ENCODE measurements at regions of chr7 and their contacts with region 1.

Region 1: DNA sequence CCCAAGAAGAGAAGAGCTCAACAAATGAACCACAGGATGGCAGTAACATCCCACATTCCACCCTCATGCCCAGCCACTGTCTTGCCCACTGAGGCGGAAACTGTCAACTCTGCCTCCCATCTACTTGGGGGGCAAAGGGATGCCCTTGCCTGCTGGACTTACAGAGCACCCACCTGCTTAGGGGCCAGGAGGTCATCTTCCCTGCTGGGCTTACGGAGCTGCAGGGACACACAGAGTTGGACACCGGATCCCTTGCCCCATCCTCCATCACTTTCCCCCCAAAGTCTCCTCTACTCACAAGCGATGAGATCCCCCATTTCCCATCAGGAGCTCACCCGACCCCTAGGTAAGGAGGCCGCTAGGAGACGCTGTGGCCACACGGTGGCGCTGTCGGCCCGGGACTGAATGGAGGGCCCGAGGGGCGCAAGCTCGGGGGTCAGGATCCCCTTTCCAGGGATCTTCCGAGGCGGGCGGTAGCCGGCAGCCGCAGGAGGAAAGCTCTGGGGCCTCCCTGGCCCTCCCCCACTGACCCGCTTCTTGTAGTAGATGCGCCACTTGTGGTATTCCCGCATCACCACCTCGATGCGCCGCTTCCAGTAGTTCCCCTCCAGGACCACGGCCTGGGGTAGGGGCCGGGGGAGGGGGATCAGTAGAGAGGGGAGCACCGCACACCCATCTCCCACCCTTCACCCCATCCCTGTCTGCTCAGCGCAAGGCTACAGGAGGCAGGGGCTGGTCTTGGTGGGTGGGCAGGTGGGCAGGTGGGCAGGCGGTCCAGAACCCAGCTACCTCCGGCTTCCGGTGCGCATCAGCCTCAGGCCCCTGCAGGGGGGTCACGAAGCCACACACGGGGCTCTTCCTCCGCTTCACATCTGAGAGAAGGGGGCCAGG is 17.3 kb downstream of the MLXIPL start:
- DNase-seq: peak; percentile 74
- ATAC-seq: peak; percentile 94
- H3K4me3 Mint-ChIP-seq: no peak overlapping the region
- H3K27ac Mint-ChIP-seq: no peak overlapping the region
- H3K4me1 Mint-ChIP-seq: no peaks in the 10 kb centered on the region
- H3K27me3 Mint-ChIP-seq: peaks cover 25% of the 10 kb centered on the region
- CTCF ChIP-seq: peak; percentile 96

Region 2: GRCh38 chr7:73482746-73483145 is 124.3 kb before region 1 on chr7:
- CTCF ChIA-PET with region 1: no interaction called
- POLR2A ChIA-PET with region 1: no interaction called
- intact Hi-C with region 1: no loop called
- DNase-seq: no peak
- ATAC-seq: no peak
- H3K4me3 Mint-ChIP-seq: no peak overlapping the region
- H3K27ac Mint-ChIP-seq: no peak overlapping the region
- H3K4me1 Mint-ChIP-seq: peaks cover 13% of the 10 kb centered on the region
- H3K27me3 Mint-ChIP-seq: no peaks in the 10 kb centered on the region
- CTCF ChIP-seq: no peak

Region 3: GRCh38 chr7:73593207-73594045 is 13.6 kb before region 1 on chr7:
- CTCF ChIA-PET with region 1: interaction called, 15 read pairs
- POLR2A ChIA-PET with region 1: no interaction called
- intact Hi-C with region 1: no loop called
- DNase-seq: no peak
- ATAC-seq: no peak
- H3K4me3 Mint-ChIP-seq: no peak overlapping the region
- H3K27ac Mint-ChIP-seq: no peak overlapping the region
- H3K4me1 Mint-ChIP-seq: no peaks in the 10 kb centered on the region
- H3K27me3 Mint-ChIP-seq: peaks cover 8% of the 10 kb centered on the region
- CTCF ChIP-seq: no peak

Region 4: DNA sequence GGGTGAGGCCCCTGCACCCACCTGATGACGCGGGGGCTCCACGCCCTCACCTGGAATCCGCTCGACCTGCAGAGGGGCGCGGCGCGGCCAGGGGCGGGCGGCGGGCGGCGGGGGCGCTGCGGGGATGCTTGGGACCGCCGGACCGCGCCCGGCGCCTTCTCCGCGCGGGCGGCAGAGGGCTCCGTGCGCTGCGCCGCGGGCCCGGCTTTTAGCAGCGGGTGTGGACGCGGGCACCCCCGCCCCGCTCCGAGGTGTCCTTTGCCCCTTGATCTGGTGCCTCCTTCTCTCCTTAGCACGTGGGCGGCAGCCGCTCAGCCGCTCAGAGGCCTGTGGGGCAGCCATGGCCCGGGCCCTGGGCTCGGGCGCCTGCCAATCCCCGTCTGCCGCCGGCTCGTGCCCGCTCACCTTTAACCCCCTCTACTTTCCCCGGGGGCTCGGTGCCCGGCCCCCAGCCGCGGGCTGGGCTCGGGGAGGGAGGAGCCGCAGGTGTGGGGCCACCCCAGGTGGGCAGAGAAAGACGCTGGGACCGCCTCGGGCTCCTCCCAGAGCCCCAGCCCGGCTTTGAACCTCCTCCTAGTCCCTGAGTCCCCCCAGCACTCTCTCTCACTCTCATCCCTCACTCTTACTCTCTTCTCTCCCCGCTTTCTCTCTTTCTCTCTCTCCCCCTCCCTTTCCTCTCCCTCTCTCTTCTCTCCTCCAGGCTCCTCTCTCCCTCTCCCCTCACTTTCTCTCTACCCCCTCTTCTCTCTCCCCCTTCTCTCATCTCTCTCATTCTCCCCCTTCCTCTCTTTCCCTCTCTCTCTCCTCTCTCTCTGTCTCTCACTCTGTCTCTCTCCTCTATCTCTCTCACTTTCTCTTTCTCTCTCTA is 40.9 kb after region 1 on chr7:
- CTCF ChIA-PET with region 1: interaction called, 16 read pairs
- POLR2A ChIA-PET with region 1: no interaction called
- intact Hi-C with region 1: no loop called
- DNase-seq: peak; percentile 62
- ATAC-seq: peak; percentile 83
- H3K4me3 Mint-ChIP-seq: peak overlapping the region; percentile 44
- H3K27ac Mint-ChIP-seq: no peak overlapping the region
- H3K4me1 Mint-ChIP-seq: peaks cover 7% of the 10 kb centered on the region
- H3K27me3 Mint-ChIP-seq: peaks cover 52% of the 10 kb centered on the region
- CTCF ChIP-seq: no peak

Region 5: DNA sequence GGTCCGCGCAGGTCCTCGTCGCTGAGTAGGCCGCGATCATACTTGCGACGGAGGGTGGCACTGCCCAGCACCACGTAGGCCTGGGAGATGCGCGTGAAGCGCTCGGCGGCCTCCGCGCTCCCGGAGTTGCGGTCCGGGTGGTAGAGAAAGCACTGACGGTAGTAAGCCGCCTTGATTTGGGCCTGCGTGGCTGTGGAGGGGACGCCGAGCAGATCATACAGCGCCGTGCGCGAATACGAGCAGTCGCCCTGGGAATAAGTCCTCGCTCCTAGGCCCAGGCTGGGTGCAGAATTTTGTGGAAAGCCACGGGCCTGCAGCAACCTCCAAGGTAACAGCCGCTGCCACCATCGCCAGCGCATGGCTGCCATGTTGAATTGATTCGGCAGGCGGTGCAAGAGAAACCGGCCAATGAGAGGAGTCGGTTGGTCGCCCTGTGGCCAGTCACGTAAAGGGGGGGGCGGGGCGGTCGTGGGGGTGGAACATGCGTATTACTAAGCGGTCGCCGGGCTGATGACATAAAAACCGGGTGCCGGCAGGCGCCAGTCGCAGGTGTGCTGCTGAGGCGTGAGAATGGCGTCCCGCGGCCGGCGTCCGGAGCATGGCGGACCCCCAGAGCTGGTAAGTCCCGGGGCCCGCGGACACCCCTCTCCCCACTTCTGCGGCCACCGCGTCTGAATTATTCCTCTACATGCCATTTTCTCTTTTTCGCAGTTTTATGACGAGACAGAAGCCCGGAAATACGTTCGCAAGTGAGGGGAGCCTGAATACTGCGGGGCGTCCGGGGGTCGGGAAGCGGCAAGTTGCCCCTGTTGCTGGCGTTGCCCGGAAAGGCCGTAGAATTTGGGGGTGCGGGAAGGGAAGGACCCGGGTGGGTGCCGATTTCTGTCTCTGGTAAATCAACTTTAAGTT is 76.3 kb after region 1 on chr7 and contains the starts of genes BUD23 and DNAJC30:
- CTCF ChIA-PET with region 1: interaction called, 10 read pairs
- POLR2A ChIA-PET with region 1: interaction called, 3 read pairs
- intact Hi-C with region 1: no loop called
- DNase-seq: peak; percentile 99
- ATAC-seq: peak; percentile 98
- H3K4me3 Mint-ChIP-seq: peak within 1 kb of the TSS; percentile 97
- H3K27ac Mint-ChIP-seq: peak within 1 kb of the TSS; percentile 97
- H3K4me1 Mint-ChIP-seq: peaks cover 47% of the 10 kb centered on the region
- H3K27me3 Mint-ChIP-seq: no peaks in the 10 kb centered on the region
- CTCF ChIP-seq: no peak
- total RNA-seq, gene BUD23: 108 TPM
- total RNA-seq, gene DNAJC30: 6.7 to 7.0 TPM

Region 6: GRCh38 chr7:73726083-73726466 is 119.0 kb after region 1 on chr7:
- CTCF ChIA-PET with region 1: interaction called, 53 read pairs
- POLR2A ChIA-PET with region 1: no interaction called
- intact Hi-C with region 1: loop called (anchors 5 kb)
- DNase-seq: no peak
- ATAC-seq: peak; percentile 24
- H3K4me3 Mint-ChIP-seq: no peak overlapping the region
- H3K27ac Mint-ChIP-seq: no peak overlapping the region
- H3K4me1 Mint-ChIP-seq: no peaks in the 10 kb centered on the region
- H3K27me3 Mint-ChIP-seq: peaks cover 6% of the 10 kb centered on the region
- CTCF ChIP-seq: peak; percentile 46

Region 7: DNA sequence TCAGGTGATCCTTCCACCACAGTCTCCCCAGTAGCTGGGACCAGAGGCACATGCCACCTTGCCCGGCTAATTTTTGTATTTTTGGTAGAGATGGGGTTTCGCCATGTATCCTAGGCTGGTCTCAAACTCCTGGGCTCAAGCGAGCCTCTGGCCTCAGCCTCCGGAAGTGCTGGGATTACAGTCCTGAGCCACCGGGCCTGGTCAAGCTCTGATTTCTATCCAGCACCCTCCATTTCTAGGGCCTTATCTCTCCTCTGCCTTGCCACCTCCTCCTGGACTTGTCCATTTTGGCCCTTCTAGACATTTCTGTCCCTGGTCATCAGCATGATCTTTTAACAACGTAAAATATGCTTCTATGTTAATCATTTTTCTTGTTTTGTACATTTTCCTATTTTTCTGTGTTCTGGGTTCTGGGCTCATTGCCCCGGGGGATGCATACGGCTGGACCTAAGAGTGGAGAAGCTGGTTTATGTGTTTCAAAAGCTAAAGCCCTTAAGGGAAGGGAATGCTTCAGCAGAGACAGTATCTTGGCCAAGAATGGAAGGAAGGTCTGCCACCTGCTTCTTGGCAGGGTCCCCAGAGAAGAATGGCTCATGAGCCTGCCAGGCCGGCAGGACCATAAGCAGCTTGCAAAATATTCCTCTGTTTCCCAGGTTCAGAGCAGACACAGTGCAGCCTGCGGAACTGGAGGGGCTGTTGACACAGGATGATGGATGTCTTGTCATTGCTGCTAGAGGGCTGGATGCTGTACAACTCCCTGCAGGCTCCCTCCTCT is 139.1 kb after region 1 on chr7:
- CTCF ChIA-PET with region 1: interaction called, 11 read pairs
- POLR2A ChIA-PET with region 1: no interaction called
- intact Hi-C with region 1: no loop called
- DNase-seq: no peak
- ATAC-seq: no peak
- H3K4me3 Mint-ChIP-seq: no peak overlapping the region
- H3K27ac Mint-ChIP-seq: no peak overlapping the region
- H3K4me1 Mint-ChIP-seq: no peaks in the 10 kb centered on the region
- H3K27me3 Mint-ChIP-seq: no peaks in the 10 kb centered on the region
- CTCF ChIP-seq: no peak

Measured in activated CD8-positive, alpha-beta T cell treated with anti-CD3 and anti-CD28 coated beads for 36 hours (primary cell).